MCF 10A (cell line): ENCODE measurements at regions of chr11 and their contacts with region 1.

Region 1: GRCh38 chr11:130979386-130979972 is 63.2 kb upstream of the SNX19 start:
- DNase-seq: peak; percentile 53
- H3K4me3 Mint-ChIP-seq: no peak overlapping the region
- H3K27ac Mint-ChIP-seq: no peak overlapping the region
- H3K4me1 Mint-ChIP-seq: no peaks in the 10 kb centered on the region
- H3K27me3 Mint-ChIP-seq: peaks cover 30% of the 10 kb centered on the region
- CTCF ChIP-seq: peak; percentile 64

Region 2: DNA sequence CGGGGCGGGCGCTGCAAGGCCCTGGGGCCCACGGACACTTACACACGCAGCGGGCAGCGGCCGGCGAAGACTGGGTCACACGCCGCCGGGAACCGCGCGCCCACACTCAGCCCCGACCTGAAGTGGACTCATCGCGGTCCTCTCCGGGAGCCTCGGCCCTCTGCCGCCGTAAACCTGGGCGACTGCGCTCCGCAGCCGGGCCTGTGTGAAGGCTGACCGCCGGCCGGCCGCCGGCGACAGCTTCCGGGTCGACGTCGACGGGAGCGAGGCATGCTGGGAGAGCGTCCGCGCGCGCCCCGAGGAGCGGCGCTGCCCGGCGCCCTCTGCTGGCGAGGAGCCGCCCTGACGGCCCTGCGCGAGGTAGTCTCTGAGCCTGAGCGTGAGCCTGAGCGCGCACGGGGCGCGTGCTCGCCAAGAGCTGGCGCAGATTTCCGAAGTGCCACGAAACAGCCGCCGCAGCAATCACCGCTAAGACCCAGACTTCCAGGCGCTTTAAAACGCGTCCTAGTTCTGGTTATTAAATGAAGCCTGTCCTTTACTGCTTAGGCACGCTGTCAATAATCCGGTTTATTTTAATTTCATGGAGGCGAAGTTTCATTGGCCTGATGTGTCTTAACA is 63.1 kb before region 1 on chr11 and contains the start of gene SNX19:
- CTCF ChIA-PET with region 1: interaction called, 24 read pairs
- POLR2A ChIA-PET with region 1: interaction called, 8 read pairs
- intact Hi-C with region 1: no loop called
- DNase-seq: peak; percentile 85
- H3K4me3 Mint-ChIP-seq: peak within 1 kb of the TSS; percentile 72
- H3K27ac Mint-ChIP-seq: peak within 1 kb of the TSS; percentile 69
- H3K4me1 Mint-ChIP-seq: peaks cover 12% of the 10 kb centered on the region
- H3K27me3 Mint-ChIP-seq: peaks cover 7% of the 10 kb centered on the region
- CTCF ChIP-seq: peak; percentile 85
- total RNA-seq, gene SNX19: 53.5 and 60.5 TPM in 2 replicates

Region 3: GRCh38 chr11:130932086-130932712 is 47.3 kb before region 1 on chr11:
- CTCF ChIA-PET with region 1: interaction called, 12 read pairs
- POLR2A ChIA-PET with region 1: no interaction called
- intact Hi-C with region 1: no loop called
- DNase-seq: no peak
- H3K4me3 Mint-ChIP-seq: no peak overlapping the region
- H3K27ac Mint-ChIP-seq: no peak overlapping the region
- H3K4me1 Mint-ChIP-seq: no peaks in the 10 kb centered on the region
- H3K27me3 Mint-ChIP-seq: no peaks in the 10 kb centered on the region
- CTCF ChIP-seq: no peak

Region 4: GRCh38 chr11:130995266-130995665 is 15.8 kb after region 1 on chr11:
- CTCF ChIA-PET with region 1: interaction called, 10 read pairs
- POLR2A ChIA-PET with region 1: no interaction called
- intact Hi-C with region 1: no loop called
- DNase-seq: no peak
- H3K4me3 Mint-ChIP-seq: no peak overlapping the region
- H3K27ac Mint-ChIP-seq: no peak overlapping the region
- H3K4me1 Mint-ChIP-seq: peaks cover 16% of the 10 kb centered on the region
- H3K27me3 Mint-ChIP-seq: no peaks in the 10 kb centered on the region
- CTCF ChIP-seq: no peak

Region 5: DNA sequence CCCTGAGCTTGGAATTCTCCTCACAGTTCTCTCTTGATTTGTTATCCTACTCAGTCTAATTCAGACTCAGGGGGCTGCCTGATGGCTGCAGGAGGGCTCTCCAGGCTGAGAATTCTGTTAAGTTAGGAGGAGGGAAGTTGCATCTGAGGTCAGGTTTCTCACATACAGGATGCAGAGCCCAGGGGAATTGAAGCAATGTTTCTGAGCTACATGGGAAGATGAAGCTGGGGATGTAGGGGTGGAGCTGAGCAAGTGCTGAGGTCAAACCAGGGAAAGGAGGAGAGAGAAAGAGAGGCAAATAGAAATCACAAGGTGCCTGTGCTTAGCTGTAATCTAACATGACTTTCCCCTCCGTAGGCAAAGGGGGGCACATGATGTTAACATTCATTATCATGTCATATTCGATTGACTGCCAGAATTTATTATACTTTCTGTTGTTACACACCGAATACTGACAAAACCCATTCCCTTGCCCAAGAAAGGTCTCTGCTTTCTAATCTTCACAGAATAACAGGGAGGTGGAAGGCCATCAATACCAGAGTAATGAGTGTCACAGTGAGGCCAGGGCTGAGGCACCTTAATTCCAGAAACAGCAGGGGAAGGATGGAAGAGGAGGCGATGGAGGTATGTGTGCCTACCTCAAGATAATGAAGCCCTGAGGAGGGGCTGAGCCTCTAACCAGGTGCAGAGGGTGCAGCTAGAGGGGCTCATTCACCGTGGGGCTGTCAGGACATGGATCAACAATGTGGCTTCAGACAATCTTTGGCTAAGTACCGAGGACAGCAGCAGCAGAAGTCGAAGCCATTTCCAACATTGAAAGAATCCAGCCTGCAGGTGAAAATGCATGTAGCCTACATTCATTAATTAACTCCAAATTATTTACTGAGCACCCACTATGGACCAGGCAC is 142.2 kb after region 1 on chr11:
- CTCF ChIA-PET with region 1: no interaction called
- POLR2A ChIA-PET with region 1: no interaction called
- intact Hi-C with region 1: no loop called
- DNase-seq: no peak
- H3K4me3 Mint-ChIP-seq: no peak overlapping the region
- H3K27ac Mint-ChIP-seq: no peak overlapping the region
- H3K4me1 Mint-ChIP-seq: no peaks in the 10 kb centered on the region
- H3K27me3 Mint-ChIP-seq: no peaks in the 10 kb centered on the region
- CTCF ChIP-seq: no peak